Right ventricle myocardium superior (tissue), 1 donor: ENCODE measurements at regions of chr5 and their contacts with region 1.

Region 1: GRCh38 chr5:173144200-173145176 is at the start of gene BNIP1:
- DNase-seq: peak; percentile 96
- ATAC-seq: peak; percentile 97
- total RNA-seq, gene BNIP1: 9.1 TPM

Region 2: GRCh38 chr5:172868924-172869591 is 275.4 kb before region 1 on chr5:
- intact Hi-C with region 1: no loop called
- DNase-seq: peak; percentile 89
- ATAC-seq: peak; percentile 71

Region 3: GRCh38 chr5:173016621-173017047 is 127.9 kb before region 1 on chr5:
- intact Hi-C with region 1: loop called (anchors 10 kb)
- DNase-seq: no peak
- ATAC-seq: peak; percentile 84

Region 4: DNA sequence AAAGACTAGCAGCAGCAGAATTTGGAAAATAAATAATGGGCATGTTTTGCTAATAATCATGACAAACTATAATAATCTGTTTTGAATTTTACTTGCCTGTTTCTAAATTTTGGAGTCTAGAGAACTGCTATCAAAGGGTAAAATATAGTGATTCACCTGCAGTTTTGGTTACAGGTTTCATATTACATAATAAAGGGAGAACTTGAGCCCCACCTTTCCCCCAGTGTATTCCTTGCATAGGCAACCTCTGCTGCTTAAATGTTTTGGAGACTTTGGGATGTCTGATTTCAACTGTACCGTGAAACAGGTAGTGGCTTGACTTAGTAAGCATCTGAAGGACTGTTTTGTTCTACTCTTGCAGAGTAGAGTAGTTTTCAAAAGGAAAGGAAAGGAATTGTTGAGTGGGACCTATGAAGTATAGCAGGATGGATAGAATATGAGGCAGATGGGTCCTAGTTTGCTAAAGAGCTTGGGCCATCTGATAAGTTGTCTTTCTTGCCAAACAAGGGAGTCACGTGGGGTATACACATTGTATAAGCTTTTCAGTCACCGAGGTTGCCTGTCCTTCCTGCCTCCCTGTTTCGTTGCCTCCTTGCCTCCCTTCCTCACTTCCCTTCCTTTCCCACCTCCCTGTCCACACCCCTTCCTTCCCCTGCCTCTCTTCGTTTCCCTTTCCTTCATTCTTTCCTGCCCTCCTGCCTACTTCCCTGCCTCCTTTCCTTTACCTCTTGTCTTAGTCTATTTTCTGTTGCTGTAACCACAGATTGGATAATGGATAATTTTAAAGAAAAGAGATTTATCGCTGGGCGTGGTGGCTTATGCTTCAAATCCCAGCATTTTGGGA is 69.1 kb before region 1 on chr5:
- intact Hi-C with region 1: no loop called
- DNase-seq: no peak
- ATAC-seq: no peak